PC-3 (cell line): ENCODE measurements at regions of chr7 and their contacts with region 1.

Region 1: GRCh38 chr7:5636914-5637313 is 144.5 kb downstream of the RNF216 start:
- DNase-seq: peak; percentile 63
- ATAC-seq: peak; percentile 94
- H3K4me3 ChIP-seq: no peak overlapping the region
- H3K27ac ChIP-seq: peak overlapping the region; percentile 40
- H3K4me1 ChIP-seq: peaks cover 19% of the 10 kb centered on the region
- H3K27me3 ChIP-seq: no peaks in the 10 kb centered on the region
- CTCF ChIP-seq: no peak

Region 2: GRCh38 chr7:5596046-5596895 is 40.6 kb before region 1 on chr7:
- CTCF ChIA-PET with region 1: no interaction called
- POLR2A ChIA-PET with region 1: interaction called, 28 read pairs
- intact Hi-C with region 1: loop called (anchors 5 kb)
- DNase-seq: peak; percentile 87
- ATAC-seq: peak; percentile 51
- H3K4me3 ChIP-seq: peak overlapping the region; percentile 97
- H3K27ac ChIP-seq: peak overlapping the region; percentile 93
- H3K4me1 ChIP-seq: peaks cover 51% of the 10 kb centered on the region
- H3K27me3 ChIP-seq: no peaks in the 10 kb centered on the region
- CTCF ChIP-seq: no peak

Region 3: DNA sequence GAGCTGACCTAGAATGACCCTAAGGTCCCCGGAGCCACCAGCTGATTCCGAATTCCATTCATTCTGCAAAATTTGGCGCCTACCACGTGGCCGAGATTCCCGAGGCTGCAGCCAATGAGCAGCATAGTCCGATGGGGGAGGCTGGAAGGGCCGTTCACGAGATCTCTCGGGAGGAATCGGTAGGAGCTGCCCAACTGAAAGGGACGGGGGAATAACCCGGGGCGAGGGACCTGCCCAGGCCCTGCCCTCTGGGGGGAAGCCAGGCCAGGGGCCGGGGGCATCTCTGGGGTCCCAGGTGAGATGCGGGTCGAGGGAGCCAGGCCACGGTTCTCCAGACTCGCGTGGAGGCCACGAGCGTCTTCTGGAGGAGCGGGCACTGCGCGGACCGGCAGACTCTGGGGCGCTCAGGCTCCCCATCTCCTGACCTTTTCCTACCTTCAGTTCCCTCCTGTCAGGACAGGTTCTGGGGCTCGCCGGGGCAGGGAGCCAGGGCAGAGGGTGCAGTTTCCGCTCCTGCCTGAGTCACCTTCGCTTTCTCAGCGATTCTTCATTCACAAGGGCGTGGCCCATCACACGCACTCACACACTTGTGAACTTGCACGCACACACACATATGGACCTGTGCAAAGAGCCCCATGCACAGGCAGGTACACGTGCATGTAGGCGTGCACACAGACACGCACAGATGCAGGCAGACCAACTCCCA is 28.8 kb before region 1 on chr7:
- CTCF ChIA-PET with region 1: no interaction called
- POLR2A ChIA-PET with region 1: no interaction called
- intact Hi-C with region 1: no loop called
- DNase-seq: peak; percentile 59
- ATAC-seq: peak; percentile 67
- H3K4me3 ChIP-seq: no peak overlapping the region
- H3K27ac ChIP-seq: peak overlapping the region; percentile 78
- H3K4me1 ChIP-seq: peaks cover 13% of the 10 kb centered on the region
- H3K27me3 ChIP-seq: no peaks in the 10 kb centered on the region
- CTCF ChIP-seq: no peak

Region 4: GRCh38 chr7:5620459-5620881 is 16.4 kb before region 1 on chr7:
- CTCF ChIA-PET with region 1: no interaction called
- POLR2A ChIA-PET with region 1: no interaction called
- intact Hi-C with region 1: no loop called
- DNase-seq: no peak
- ATAC-seq: no peak
- H3K4me3 ChIP-seq: no peak overlapping the region
- H3K27ac ChIP-seq: no peak overlapping the region
- H3K4me1 ChIP-seq: no peaks in the 10 kb centered on the region
- H3K27me3 ChIP-seq: no peaks in the 10 kb centered on the region
- CTCF ChIP-seq: no peak

Region 5: DNA sequence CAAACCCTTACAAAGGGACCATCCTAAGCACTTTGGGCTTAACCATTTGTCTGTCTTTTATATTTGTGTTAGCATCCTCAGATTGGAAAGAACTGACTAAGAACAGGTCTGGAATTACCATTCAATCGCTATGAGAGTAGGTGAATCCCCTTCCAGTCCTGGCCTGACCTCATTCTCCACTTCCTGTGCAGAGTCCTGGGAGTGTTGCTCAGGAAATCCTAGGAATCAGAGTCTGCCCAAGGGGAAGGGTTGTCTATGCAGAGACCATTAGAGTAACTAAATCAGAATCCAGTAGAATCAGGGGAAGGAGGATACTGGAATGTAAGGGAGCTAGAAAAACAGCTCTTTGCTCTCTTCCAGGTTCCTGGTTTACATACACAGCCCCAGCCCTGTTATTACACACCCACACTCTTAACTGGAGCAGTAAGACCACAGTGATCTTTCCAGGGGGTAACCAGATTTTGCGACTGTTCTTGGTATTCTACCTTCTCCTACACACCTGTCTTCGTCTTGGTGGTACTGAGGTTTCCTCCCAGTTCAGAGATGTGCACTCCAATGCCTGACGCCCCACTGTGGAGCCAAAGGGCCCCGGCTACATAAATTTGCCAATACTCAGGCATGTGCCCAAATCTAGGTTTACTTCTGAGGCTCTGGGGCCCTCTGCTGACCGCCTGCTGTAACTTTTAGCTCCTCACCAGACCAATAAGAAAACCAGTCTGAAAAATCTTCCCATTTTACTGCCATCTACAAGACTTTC is 40.8 kb after region 1 on chr7:
- CTCF ChIA-PET with region 1: interaction called, 15 read pairs
- POLR2A ChIA-PET with region 1: no interaction called
- intact Hi-C with region 1: no loop called
- DNase-seq: peak; percentile 70
- ATAC-seq: peak; percentile 93
- H3K4me3 ChIP-seq: no peak overlapping the region
- H3K27ac ChIP-seq: no peak overlapping the region
- H3K4me1 ChIP-seq: peaks cover 8% of the 10 kb centered on the region
- H3K27me3 ChIP-seq: no peaks in the 10 kb centered on the region
- CTCF ChIP-seq: peak; percentile 82

Region 6: GRCh38 chr7:5692112-5692844 is 55.4 kb after region 1 on chr7:
- CTCF ChIA-PET with region 1: no interaction called
- POLR2A ChIA-PET with region 1: no interaction called
- intact Hi-C with region 1: loop called (anchors 1 kb)
- DNase-seq: peak; percentile 93
- ATAC-seq: peak; percentile 65
- H3K4me3 ChIP-seq: peak overlapping the region; percentile 62
- H3K27ac ChIP-seq: peak overlapping the region; percentile 98
- H3K4me1 ChIP-seq: peaks cover 55% of the 10 kb centered on the region
- H3K27me3 ChIP-seq: no peaks in the 10 kb centered on the region
- CTCF ChIP-seq: no peak